Activated CD4-positive, alpha-beta memory T cell treated with anti-CD3 and anti-CD28 coated beads for 36 hours (primary cell): ENCODE measurements at regions of chr1 and their contacts with region 1.

Region 1: GRCh38 chr1:151443846-151444782 is 15.2 kb downstream of the POGZ start:
- DNase-seq: peak; percentile 75
- H3K4me3 Mint-ChIP-seq: no peak overlapping the region
- H3K27ac Mint-ChIP-seq: no peak overlapping the region
- H3K4me1 Mint-ChIP-seq: peaks cover 53% of the 10 kb centered on the region
- H3K27me3 Mint-ChIP-seq: no peaks in the 10 kb centered on the region

Region 2: DNA sequence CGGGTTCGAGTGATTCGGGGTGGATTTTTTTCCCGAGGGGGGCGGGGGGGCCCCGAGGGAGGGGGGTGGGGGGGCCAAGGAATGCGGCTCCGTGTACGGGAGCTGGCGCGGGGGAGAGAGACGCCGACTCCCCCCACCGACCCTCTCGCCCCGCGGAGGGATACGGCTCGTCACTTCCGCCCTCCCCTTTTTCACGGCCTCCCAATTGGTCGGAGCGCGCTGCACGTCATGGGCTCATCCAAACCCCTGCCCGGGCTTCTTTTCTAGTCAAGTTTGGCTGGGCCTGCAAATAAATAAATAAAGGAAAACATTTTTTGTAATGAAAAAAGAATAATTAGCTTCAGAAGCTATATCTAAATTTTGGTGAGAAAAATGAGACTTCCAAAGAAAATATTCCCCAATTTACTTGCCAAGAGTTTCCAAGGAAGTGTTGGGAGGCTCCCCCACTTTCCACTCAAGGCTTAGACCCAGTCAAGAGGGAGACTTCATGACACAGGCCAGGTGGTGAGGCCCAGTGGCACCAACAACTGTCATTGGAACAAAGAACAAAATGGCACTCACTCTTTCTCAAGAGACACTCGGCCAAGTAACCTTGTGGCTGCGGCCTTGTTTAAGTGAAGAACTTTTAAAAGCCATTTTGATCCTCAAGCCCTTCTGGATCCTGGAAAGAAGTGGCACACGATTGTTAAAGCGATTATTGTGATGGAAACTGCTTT is 15.4 kb after region 1 on chr1 and contains the start of gene POGZ:
- CTCF ChIA-PET with region 1: interaction called, 8 read pairs
- POLR2A ChIA-PET with region 1: interaction called, 3 read pairs
- intact Hi-C with region 1: loop called (anchors 2 kb)
- DNase-seq: peak; percentile 96
- H3K4me3 Mint-ChIP-seq: peak within 1 kb of the TSS; percentile 85
- H3K27ac Mint-ChIP-seq: peak within 1 kb of the TSS; percentile 91
- H3K4me1 Mint-ChIP-seq: peaks cover 20% of the 10 kb centered on the region
- H3K27me3 Mint-ChIP-seq: peaks cover 16% of the 10 kb centered on the region
- total RNA-seq, gene POGZ: 73.7 to 76.3 TPM

Region 3: GRCh38 chr1:151534665-151535278 is 90.7 kb after region 1 on chr1:
- CTCF ChIA-PET with region 1: interaction called, 13 read pairs
- POLR2A ChIA-PET with region 1: no interaction called
- intact Hi-C with region 1: loop called (anchors 5 kb)
- DNase-seq: peak; percentile 88
- H3K4me3 Mint-ChIP-seq: no peak overlapping the region
- H3K27ac Mint-ChIP-seq: no peak overlapping the region
- H3K4me1 Mint-ChIP-seq: peaks cover 2% of the 10 kb centered on the region
- H3K27me3 Mint-ChIP-seq: no peaks in the 10 kb centered on the region

Region 4: DNA sequence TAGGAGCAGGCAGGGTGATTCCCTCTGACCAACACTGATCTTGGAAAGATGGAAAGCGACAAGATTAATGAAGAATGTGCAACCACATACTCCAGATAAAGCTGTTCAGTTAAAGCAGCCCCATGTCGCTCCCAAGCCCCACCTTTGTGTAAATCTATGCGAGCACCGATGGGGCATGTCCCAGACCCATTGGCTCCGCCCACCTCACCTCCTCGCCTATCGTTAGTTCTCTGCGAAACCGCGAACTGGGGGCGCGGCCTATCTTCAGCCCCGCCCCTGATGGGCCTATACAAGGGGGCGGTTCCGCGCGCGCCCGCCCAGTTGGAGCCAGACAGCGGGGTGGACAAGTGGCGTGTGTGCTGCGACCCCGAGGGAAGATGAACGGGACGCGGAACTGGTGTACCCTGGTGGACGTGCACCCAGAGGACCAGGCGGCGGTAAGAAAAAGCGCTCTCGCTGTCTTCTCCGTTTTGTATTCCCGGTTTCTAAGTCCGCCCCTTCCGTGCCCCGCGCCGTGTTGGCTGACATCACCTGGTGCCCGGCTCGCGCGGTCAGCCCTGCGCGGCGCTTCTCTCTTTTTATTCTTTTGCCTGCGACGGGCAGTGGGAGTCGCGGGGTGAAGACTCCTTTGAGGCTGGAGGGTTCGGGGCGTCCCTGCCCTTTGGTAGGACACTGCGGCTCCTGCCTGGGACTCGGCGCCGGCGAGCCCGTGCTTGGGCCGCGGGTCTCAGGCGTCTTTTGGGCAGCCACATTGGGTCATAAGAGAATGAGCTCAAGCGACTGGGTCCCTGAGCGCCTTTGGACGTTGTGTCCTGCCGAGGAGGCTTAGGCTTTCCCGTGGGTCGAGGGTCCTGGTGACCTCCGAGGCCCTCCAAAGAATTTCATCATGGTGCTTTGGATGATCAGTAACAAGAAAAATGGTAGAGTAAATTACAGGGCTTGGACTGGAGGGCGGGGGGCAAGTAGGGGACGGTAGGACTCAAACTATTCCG is 96.2 kb after region 1 on chr1 and contains the start of gene TUFT1:
- CTCF ChIA-PET with region 1: interaction called, 13 read pairs
- POLR2A ChIA-PET with region 1: no interaction called
- intact Hi-C with region 1: loop called (anchors 5 kb)
- DNase-seq: peak; percentile 95
- H3K4me3 Mint-ChIP-seq: peak within 1 kb of the TSS; percentile 85
- H3K27ac Mint-ChIP-seq: no peak within 1 kb of the TSS
- H3K4me1 Mint-ChIP-seq: peaks cover 19% of the 10 kb centered on the region
- H3K27me3 Mint-ChIP-seq: no peaks in the 10 kb centered on the region
- total RNA-seq, gene TUFT1: 3.0 to 4.1 TPM

Region 5: GRCh38 chr1:151739590-151740375 is 295.7 kb after region 1 on chr1:
- CTCF ChIA-PET with region 1: interaction called, 11 read pairs
- POLR2A ChIA-PET with region 1: no interaction called
- intact Hi-C with region 1: loop called (anchors 10 kb)
- DNase-seq: no peak
- H3K4me3 Mint-ChIP-seq: no peak overlapping the region
- H3K27ac Mint-ChIP-seq: no peak overlapping the region
- H3K4me1 Mint-ChIP-seq: peaks cover 5% of the 10 kb centered on the region
- H3K27me3 Mint-ChIP-seq: no peaks in the 10 kb centered on the region